AG04449 (cell line): ENCODE measurements at regions of chr5 and their contacts with region 1.

Region 1: DNA sequence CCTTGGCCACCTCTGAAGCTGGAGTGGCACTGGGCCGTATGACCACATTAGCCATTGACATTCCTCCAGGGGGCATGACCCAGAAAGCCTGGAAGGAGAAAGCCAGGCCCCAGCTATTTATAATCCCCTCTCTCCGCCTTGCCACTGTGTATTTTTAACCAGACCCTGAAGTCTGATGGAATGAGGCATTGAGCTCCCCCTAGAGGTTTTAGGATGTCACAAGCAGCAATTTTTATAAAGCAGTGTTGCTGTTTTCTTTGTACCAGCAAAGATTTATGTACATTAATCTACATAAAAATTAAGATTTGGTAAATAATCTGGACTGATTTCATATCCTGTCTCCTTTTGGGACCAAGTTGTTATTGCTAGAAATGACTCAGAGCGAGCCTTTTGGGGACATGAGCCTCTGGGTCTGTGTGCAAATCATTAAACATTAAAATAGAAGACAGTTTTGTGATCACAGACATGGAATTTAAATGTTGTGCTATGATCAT is 127.1 kb downstream of the TRIO start:
- DNase-seq: no peak
- H3K4me3 ChIP-seq: no peak overlapping the region
- CTCF ChIP-seq: peak; percentile 62

Region 2: DNA sequence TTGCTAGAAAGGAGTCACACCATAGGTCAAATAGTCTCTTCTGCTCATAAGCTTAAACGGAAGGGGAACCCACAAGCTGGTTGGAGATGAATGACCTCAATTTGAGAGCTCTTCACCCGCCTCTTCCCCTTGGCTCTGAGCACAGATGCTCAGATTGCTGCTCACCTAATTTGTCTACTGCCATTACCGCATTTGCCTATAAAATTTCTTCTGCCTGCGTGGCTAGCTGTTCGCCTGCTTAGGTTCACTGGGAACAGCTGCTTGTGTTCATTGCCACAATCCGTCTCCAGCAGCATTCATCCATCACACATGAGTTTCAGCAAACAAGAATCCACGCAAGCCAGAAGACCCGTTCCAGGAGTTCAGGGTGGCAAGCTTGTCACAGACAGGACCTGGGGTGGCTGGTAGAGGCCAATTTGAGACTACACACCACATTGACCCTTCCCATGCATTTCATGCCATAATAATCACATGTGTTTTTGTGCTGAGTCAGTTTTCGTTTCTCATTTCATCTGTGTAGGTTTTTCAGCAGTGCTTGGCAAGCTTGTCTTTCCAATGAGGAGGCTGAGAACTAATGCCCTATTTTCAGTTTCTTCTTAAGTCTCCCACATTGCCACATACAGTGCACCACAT is 275.5 kb before region 1 on chr5:
- CTCF ChIA-PET with region 1: interaction called, 17 read pairs
- POLR2A ChIA-PET with region 1: no interaction called
- DNase-seq: no peak
- H3K4me3 ChIP-seq: no peak overlapping the region
- CTCF ChIP-seq: no peak

Region 3: GRCh38 chr5:14142827-14143548 is 127.3 kb before region 1 on chr5 and contains the start of gene TRIO:
- CTCF ChIA-PET with region 1: interaction called, 14 read pairs
- POLR2A ChIA-PET with region 1: interaction called, 5 read pairs
- DNase-seq: no peak
- H3K4me3 ChIP-seq: peak within 1 kb of the TSS; percentile 95
- CTCF ChIP-seq: peak; percentile 53

Region 4: GRCh38 chr5:14190194-14191164 is 79.8 kb before region 1 on chr5:
- CTCF ChIA-PET with region 1: interaction called, 15 read pairs
- POLR2A ChIA-PET with region 1: interaction called, 6 read pairs
- DNase-seq: peak; percentile 97
- H3K4me3 ChIP-seq: no peak overlapping the region; the same call in 1 of the 2 replicates
- CTCF ChIP-seq: no peak

Region 5: GRCh38 chr5:14258840-14259239 is 11.4 kb before region 1 on chr5:
- CTCF ChIA-PET with region 1: interaction called, 28 read pairs
- POLR2A ChIA-PET with region 1: no interaction called
- DNase-seq: no peak
- H3K4me3 ChIP-seq: no peak overlapping the region
- CTCF ChIP-seq: no peak

Region 6: DNA sequence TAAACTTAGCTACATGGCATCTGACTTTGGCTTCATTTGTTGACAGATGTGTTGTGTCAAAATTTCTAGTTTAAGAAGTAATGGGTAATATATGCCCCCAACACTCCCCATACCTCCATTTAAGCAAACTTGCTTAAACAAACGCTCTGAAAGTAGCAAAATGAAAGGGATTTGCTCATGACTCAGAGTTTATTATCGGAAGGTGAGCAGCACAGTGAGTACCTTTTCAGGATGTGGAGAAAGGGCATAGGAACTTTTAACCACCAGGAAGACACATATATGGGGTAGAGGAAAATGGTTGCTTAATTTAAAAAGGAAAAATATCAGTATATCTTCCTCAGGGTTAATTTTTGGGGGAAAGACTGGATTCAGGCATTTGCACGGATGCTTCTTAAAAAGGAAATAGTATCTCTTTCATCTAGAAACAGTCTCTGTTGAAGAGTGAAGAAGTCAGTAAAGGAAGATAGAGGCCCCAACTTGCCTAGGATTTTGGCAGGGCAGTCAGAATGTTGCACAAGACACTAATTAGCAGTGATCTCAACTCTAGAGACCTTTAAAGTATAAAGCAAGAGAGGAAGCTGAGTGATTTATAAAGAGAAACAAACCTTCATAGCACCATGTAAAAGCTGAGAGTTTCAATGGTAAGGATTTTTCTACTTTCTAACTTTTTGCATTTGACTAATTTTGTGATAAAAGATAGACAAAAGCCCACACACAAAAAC is 28.0 kb after region 1 on chr5:
- CTCF ChIA-PET with region 1: interaction called, 20 read pairs
- POLR2A ChIA-PET with region 1: no interaction called
- DNase-seq: peak; percentile 10
- H3K4me3 ChIP-seq: no peak overlapping the region
- CTCF ChIP-seq: no peak

Region 7: GRCh38 chr5:14308374-14309154 is 38.3 kb after region 1 on chr5:
- CTCF ChIA-PET with region 1: no interaction called
- POLR2A ChIA-PET with region 1: no interaction called
- DNase-seq: no peak
- H3K4me3 ChIP-seq: no peak overlapping the region
- CTCF ChIP-seq: no peak